IMR-90 (cell line): ENCODE measurements at regions of chr1 and their contacts with region 1.

Region 1: GRCh38 chr1:90133133-90133532 is 138.2 kb downstream of the ZNF326 start:
- DNase-seq: peak; percentile 3
- ATAC-seq: peak; percentile 32; the same call in 1 of the 2 replicates
- H3K4me3 ChIP-seq: no peak overlapping the region
- H3K27ac ChIP-seq: no peak overlapping the region
- H3K4me1 ChIP-seq: no peaks in the 10 kb centered on the region
- H3K27me3 ChIP-seq: no peaks in the 10 kb centered on the region
- CTCF ChIP-seq: peak; percentile 32
- POLR2A ChIP-seq: no peak
- RAD21 ChIP-seq: no peak

Region 2: DNA sequence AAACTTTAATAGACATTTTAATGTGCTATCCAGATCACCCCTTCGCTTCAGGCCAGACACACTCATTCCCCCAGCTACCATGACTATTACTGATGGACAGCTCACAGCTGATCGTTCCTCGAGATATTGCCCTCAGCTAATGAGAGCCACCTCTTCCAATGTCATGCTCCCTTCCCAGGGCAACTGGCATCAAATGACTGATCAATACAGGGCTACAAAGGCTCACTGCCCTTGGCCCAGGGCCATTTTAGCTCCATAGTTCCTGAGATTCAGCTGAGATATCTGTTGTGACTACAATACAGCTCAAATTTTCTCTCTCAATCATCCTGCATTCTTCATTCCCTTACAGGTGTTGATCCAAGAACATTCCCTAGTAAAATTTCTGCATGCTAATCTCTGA is 1553.5 kb before region 1 on chr1:
- CTCF ChIA-PET with region 1: interaction called, 13 read pairs
- POLR2A ChIA-PET with region 1: no interaction called
- dilution Hi-C with region 1: no loop called
- in situ Hi-C with region 1: no loop called
- intact Hi-C with region 1: no loop called
- DNase-seq: no peak
- ATAC-seq: no peak
- H3K4me3 ChIP-seq: no peak overlapping the region
- H3K27ac ChIP-seq: no peak overlapping the region
- H3K4me1 ChIP-seq: no peaks in the 10 kb centered on the region
- H3K27me3 ChIP-seq: no peaks in the 10 kb centered on the region
- CTCF ChIP-seq: no peak
- POLR2A ChIP-seq: no peak
- RAD21 ChIP-seq: no peak

Region 3: GRCh38 chr1:90104941-90105538 is 28.1 kb before region 1 on chr1:
- CTCF ChIA-PET with region 1: no interaction called
- POLR2A ChIA-PET with region 1: no interaction called
- dilution Hi-C with region 1: no loop called
- in situ Hi-C with region 1: no loop called
- intact Hi-C with region 1: no loop called
- DNase-seq: no peak
- ATAC-seq: no peak
- H3K4me3 ChIP-seq: no peak overlapping the region
- H3K27ac ChIP-seq: no peak overlapping the region
- H3K4me1 ChIP-seq: no peaks in the 10 kb centered on the region
- H3K27me3 ChIP-seq: peaks cover 16% of the 10 kb centered on the region
- CTCF ChIP-seq: no peak
- POLR2A ChIP-seq: no peak
- RAD21 ChIP-seq: no peak